ENCODE measurements at regions of chr14 and their contacts with region 1.

Region 1: GRCh38 chr14:44803239-44803905 is 158.4 kb downstream of the KLHL28 start:
- DNase-seq: peak; percentile 46
- H3K4me3 ChIP-seq: no peak overlapping the region
- H3K27ac ChIP-seq: no peak overlapping the region
- H3K4me1 ChIP-seq: no peaks in the 10 kb centered on the region
- H3K27me3 ChIP-seq: no peaks in the 10 kb centered on the region
- CTCF ChIP-seq: peak; percentile 45 to 71

Region 2: DNA sequence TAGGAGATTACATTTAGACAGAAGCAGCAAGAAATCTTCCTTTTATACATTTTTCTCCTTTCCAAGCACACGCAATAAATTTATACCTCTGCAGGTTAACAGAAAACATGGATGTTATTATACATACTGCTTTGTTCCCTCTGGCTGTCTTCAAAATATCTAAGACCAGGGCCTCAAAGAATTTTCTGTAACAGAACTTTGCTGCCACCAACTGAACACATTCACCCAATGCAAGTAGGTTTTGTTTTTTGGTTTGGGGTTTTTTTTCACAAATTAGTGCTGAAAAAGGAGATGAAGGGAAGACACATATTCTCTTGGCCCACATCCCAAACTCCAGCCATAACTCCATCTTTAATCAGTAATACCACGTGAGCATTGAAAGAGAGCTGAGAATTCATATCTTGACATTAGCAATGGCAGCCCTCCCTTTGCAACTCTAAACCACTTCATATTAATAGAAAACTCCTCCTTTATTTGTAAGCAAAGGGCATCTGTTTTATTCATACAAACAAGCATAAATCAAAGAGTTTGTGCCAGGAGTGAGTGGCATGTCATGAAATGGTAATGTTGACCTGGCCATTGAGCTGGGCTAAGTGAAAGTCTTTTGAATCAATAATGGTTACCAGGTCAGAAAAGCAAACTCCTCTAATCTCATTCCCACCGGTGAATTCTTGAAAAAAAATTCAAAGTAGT is 145.5 kb before region 1 on chr14:
- CTCF ChIA-PET with region 1: no interaction called
- dilution Hi-C with region 1: no loop called
- in situ Hi-C with region 1: no loop called
- intact Hi-C with region 1: loop called (anchors 10 kb)
- DNase-seq: peak; percentile 1
- H3K4me3 ChIP-seq: no peak overlapping the region
- H3K27ac ChIP-seq: no peak overlapping the region
- H3K4me1 ChIP-seq: no peaks in the 10 kb centered on the region
- H3K27me3 ChIP-seq: no peaks in the 10 kb centered on the region
- CTCF ChIP-seq: no peak